GM10248 (cell line): ENCODE measurements at regions of chr17 and their contacts with region 1.

Region 1: GRCh38 chr17:58303971-58304725 is 23.4 kb upstream of the MPO start:
- DNase-seq: peak; percentile 91
- CTCF ChIP-seq: peak; percentile 79

Region 2: DNA sequence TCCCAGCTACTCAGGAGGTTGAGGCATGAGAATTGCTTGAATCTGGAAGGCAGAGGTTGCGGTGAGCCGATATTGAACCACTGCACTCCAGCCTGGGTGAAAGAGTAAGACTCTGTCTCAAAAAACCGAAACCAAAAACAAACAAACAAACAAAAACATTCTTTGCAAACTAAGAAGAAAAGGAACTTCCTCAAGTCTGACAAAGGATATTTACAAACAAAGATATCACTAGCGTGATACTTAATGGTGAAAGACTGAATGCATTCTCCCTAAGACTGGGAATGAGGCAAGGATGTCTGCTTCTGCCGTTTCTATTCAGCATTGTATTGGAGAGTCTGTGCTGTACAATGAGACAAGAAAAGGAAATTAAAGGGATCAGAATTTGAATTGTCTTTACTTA is 12.9 kb before region 1 on chr17:
- CTCF ChIA-PET with region 1: interaction called, 13 read pairs
- POLR2A ChIA-PET with region 1: no interaction called
- DNase-seq: no peak
- CTCF ChIP-seq: no peak

Region 3: GRCh38 chr17:58447039-58447975 is 143.2 kb after region 1 on chr17:
- CTCF ChIA-PET with region 1: interaction called, 25 read pairs
- POLR2A ChIA-PET with region 1: no interaction called
- DNase-seq: peak; percentile 70
- CTCF ChIP-seq: peak; percentile 89